ENCODE measurements at regions of chr15 and their contacts with region 1.

Region 1: GRCh38 chr15:80970018-80970658 is 19.5 kb downstream of the MESD start:
- DNase-seq: no peak
- ATAC-seq: peak; percentile 85
- H3K4me3 ChIP-seq: no peak overlapping the region
- H3K27ac ChIP-seq: no peak overlapping the region
- H3K4me1 ChIP-seq: no peaks in the 10 kb centered on the region
- H3K27me3 ChIP-seq: no peaks in the 10 kb centered on the region
- CTCF ChIP-seq: peak; percentile 62 to 87 (median 74)
- EP300 ChIP-seq: no peak
- POLR2A ChIP-seq: no peak
- RAD21 ChIP-seq: peak; percentile 82

Region 2: GRCh38 chr15:80455668-80456442 is 514.3 kb before region 1 on chr15:
- CTCF ChIA-PET with region 1: interaction called, 39 read pairs
- POLR2A ChIA-PET with region 1: no interaction called
- RAD21 ChIA-PET with region 1: interaction called, 19 read pairs
- SMC1A ChIA-PET with region 1: interaction called, 18 read pairs
- in situ Hi-C with region 1: loop called (anchors 5 kb)
- intact Hi-C with region 1: loop called (anchors 2 kb)
- DNase-seq: peak; percentile 16
- ATAC-seq: peak; percentile 88
- H3K4me3 ChIP-seq: no peak overlapping the region
- H3K27ac ChIP-seq: no peak overlapping the region
- H3K4me1 ChIP-seq: no peaks in the 10 kb centered on the region
- H3K27me3 ChIP-seq: no peaks in the 10 kb centered on the region; a peak in 3 of 4 replicates
- CTCF ChIP-seq: peak; percentile 90 to 98 (median 97); a peak in 5 of 6 replicates
- EP300 ChIP-seq: no peak
- POLR2A ChIP-seq: no peak
- RAD21 ChIP-seq: peak; percentile 96

Region 3: DNA sequence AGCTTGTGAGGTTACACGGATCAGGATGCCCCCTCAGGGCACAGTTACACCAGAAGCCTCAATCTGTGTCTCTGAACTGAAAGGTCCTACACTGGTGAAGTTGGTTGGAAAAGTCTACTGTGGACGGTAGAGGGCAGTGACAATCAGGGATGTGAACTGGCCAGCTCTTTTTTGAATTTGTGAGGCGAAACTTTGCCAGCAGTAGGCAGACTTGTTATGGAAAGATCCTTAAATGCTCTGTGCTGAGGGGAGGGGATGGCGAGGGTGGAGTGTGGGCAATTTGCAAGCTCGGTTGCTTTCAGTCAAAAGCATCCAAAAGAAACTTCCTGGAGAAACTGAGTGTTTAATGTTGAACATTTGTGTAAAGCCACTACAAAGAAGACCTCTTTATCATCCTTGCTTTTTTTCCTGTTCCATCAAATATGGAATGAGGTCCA is 402.4 kb before region 1 on chr15:
- CTCF ChIA-PET with region 1: interaction called, 28 read pairs
- POLR2A ChIA-PET with region 1: no interaction called
- RAD21 ChIA-PET with region 1: interaction called, 5 read pairs
- SMC1A ChIA-PET with region 1: interaction called, 4 read pairs
- in situ Hi-C with region 1: no loop called
- intact Hi-C with region 1: loop called (anchors 2 kb)
- DNase-seq: no peak
- ATAC-seq: peak; percentile 87
- H3K4me3 ChIP-seq: no peak overlapping the region
- H3K27ac ChIP-seq: no peak overlapping the region
- H3K4me1 ChIP-seq: no peaks in the 10 kb centered on the region
- H3K27me3 ChIP-seq: peaks cover 2 to 5% of the 10 kb centered on the region in 2 experiments; a peak in 3 of 4 replicates
- CTCF ChIP-seq: peak; percentile 56 to 69 (median 59); a peak in 4 of 6 replicates
- EP300 ChIP-seq: no peak
- POLR2A ChIP-seq: no peak
- RAD21 ChIP-seq: peak; percentile 71

Region 4: DNA sequence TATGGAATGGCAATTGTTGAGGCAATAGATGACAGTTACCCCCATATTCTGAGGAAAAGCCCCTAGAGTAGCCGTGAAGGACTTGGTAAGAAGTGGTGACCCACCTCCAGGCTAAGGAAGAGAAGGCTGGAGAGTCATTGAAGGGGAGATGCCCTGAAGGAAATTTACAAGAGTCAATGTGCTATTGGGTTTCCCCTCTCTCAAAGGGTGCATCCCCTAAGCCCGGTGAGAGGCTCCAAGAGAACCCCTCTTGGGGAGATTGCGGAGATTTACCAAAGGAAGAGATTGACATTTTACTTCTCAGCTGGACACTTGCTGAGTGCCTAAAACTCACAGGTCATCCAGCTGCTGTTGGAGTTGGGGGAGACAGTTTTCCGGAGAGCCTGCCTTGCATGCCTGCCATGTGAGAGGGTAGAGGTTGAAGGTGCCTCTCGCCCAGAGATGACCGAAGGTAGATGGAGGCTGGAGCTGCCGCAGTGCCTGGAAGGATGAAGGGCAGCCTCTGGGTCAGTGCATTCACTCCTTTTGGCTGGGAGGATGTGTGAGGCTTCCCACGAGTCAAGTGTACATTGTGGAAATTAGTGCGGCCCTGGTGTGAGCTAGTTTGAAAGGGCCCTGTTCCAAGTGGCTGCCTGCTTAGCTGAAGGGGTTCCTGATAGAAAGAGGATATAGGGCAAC is 11.2 kb before region 1 on chr15:
- CTCF ChIA-PET with region 1: interaction called, 20 read pairs
- POLR2A ChIA-PET with region 1: no interaction called
- RAD21 ChIA-PET with region 1: interaction called, 3 read pairs
- SMC1A ChIA-PET with region 1: interaction called, 4 read pairs
- in situ Hi-C with region 1: no loop called
- intact Hi-C with region 1: no loop called
- DNase-seq: no peak
- ATAC-seq: no peak
- H3K4me3 ChIP-seq: no peak overlapping the region
- H3K27ac ChIP-seq: no peak overlapping the region
- H3K4me1 ChIP-seq: no peaks in the 10 kb centered on the region
- H3K27me3 ChIP-seq: no peaks in the 10 kb centered on the region
- CTCF ChIP-seq: no peak
- EP300 ChIP-seq: no peak
- POLR2A ChIP-seq: no peak
- RAD21 ChIP-seq: no peak

Measured in GM12878 (cell line).